A673 (cell line): ENCODE measurements at regions of chr1 and their contacts with region 1.

Region 1: GRCh38 chr1:17059739-17060460 is 6.1 kb upstream of the SDHB start:
- DNase-seq: peak; percentile 85
- H3K4me3 ChIP-seq: peak overlapping the region; percentile 22
- H3K27ac ChIP-seq: peak overlapping the region; percentile 88
- H3K4me1 ChIP-seq: peaks cover 40% of the 10 kb centered on the region
- H3K27me3 ChIP-seq: no peaks in the 10 kb centered on the region
- CTCF ChIP-seq: peak; percentile 95

Region 2: GRCh38 chr1:17125756-17126237 is 65.9 kb after region 1 on chr1:
- CTCF ChIA-PET with region 1: no interaction called
- POLR2A ChIA-PET with region 1: no interaction called
- intact Hi-C with region 1: loop called (anchors 2 kb)
- DNase-seq: peak; percentile 91
- H3K4me3 ChIP-seq: no peak overlapping the region
- H3K27ac ChIP-seq: no peak overlapping the region
- H3K4me1 ChIP-seq: peaks cover 53% of the 10 kb centered on the region
- H3K27me3 ChIP-seq: no peaks in the 10 kb centered on the region
- CTCF ChIP-seq: peak; percentile 94

Region 3: DNA sequence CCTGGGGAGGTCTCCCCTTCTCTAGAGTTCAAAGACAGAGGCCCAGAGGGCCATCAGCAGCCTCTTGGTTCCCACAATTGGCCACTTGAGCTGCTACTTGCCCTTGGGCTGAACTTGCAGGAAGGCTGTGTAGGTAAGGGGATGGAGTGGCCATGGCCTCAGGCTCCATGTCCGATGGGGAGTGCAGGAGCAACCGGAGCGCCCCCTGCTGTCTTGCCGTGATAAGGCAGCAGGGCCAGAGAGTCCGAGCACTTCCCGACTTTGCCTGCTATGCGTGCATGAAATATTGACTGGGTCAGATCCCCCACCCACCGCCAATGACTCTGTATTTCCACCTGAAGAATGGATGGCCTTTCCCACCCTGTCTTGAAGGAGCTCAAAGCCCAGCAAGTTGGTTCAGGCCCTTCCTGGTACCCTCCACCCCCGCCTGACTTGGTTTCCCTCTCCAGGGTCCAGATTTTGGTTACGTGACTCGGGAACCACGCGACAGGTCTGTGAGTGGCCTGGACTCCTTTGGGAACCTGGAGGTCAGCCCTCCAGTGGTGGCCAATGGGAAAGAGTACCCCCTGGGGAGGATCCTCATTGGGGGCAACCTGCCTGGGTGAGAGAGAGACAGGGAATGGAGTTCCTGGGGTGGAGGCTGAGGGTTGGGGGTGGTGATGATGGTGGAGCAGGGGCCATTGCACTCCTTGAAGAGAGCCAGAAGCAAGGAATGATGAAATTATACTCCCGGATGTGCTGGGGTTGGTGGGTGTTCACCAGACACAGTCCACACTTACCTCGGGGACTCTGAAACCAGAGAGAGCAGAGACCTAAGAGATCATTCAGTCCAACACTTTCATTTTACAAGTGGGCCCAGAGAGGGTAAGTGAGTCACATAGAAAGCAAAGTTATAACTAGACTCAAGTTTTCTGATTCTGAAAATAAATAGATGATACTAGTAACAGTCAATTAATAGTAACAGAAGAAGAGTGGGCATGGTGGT is 214.6 kb after region 1 on chr1:
- CTCF ChIA-PET with region 1: no interaction called
- POLR2A ChIA-PET with region 1: no interaction called
- intact Hi-C with region 1: loop called (anchors 1 kb)
- DNase-seq: peak; percentile 67
- H3K4me3 ChIP-seq: no peak overlapping the region
- H3K27ac ChIP-seq: no peak overlapping the region
- H3K4me1 ChIP-seq: no peaks in the 10 kb centered on the region
- H3K27me3 ChIP-seq: no peaks in the 10 kb centered on the region
- CTCF ChIP-seq: peak; percentile 94

Region 4: DNA sequence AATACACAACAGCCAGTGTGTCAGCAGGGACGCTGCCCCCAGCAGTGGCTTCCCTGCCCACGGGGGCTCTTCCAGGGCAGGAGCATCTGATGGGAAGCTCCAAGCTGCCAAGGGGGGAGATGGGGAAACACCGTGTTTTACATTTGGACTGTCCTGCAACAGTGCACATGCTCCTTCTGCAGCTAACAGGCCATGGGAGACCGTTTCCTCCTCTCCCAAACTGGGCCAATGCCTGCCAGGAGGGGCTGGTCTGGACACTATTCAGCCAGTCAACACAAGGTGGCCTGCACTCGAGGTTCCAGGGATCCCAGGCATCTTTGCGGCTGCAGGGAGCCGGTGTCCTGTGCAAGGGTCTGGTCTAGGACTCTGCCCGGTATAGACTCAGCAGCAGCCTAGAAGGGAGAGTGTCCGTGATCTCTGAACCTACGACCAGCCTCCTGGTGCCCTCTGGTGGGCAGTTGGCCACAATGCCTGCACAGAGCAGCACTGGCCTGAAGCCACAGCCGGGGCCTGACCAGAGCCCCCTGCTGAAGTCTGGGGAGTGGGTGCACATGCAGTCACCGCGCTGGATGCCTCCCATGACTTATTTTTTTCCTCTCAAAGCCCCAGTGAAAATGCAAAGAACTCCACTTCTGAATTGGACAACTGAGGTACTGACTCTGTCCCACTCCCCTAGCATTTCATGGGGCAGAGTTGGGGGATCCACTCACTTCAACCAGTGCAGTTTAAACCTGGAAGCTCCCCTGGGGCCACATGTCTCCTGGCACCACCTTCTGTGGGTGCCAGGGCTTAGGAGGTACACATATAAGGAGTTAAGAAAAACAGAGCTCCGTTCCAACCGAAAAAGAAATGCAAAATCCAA is 346.2 kb after region 1 on chr1:
- CTCF ChIA-PET with region 1: no interaction called
- POLR2A ChIA-PET with region 1: no interaction called
- intact Hi-C with region 1: loop called (anchors 5 kb)
- DNase-seq: peak; percentile 39
- H3K4me3 ChIP-seq: no peak overlapping the region
- H3K27ac ChIP-seq: no peak overlapping the region
- H3K4me1 ChIP-seq: no peaks in the 10 kb centered on the region
- H3K27me3 ChIP-seq: no peaks in the 10 kb centered on the region
- CTCF ChIP-seq: peak; percentile 77

Region 5: GRCh38 chr1:17494114-17494729 is 434.3 kb after region 1 on chr1:
- CTCF ChIA-PET with region 1: no interaction called
- POLR2A ChIA-PET with region 1: no interaction called
- intact Hi-C with region 1: loop called (anchors 5 kb)
- DNase-seq: peak; percentile 84
- H3K4me3 ChIP-seq: no peak overlapping the region
- H3K27ac ChIP-seq: no peak overlapping the region
- H3K4me1 ChIP-seq: no peaks in the 10 kb centered on the region
- H3K27me3 ChIP-seq: no peaks in the 10 kb centered on the region
- CTCF ChIP-seq: peak; percentile 96

Region 6: DNA sequence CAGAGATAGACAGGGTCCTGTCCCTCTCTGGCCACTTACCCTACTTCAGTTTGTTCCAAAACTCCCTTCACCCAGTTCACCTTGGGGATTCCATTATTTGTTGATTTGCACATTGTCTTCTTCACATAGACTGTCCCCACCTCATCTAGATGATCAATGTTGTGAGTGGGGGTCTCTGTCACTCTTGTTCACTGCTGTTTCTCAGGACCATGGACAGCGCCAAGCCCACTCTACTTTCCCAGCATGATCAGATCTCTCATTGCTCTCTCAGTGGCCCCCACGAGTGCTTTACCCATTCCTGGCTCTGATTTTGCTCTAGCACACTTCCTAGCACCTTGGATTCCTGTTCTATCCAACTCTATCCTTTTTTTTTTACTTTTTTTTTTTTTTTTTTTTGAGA is 1002.3 kb after region 1 on chr1:
- CTCF ChIA-PET with region 1: no interaction called
- POLR2A ChIA-PET with region 1: no interaction called
- intact Hi-C with region 1: no loop called
- DNase-seq: no peak
- H3K4me3 ChIP-seq: no peak overlapping the region
- H3K27ac ChIP-seq: no peak overlapping the region
- H3K4me1 ChIP-seq: no peaks in the 10 kb centered on the region
- H3K27me3 ChIP-seq: peaks cover 32% of the 10 kb centered on the region
- CTCF ChIP-seq: no peak